Endothelial cell of umbilical vein (primary cell): ENCODE measurements at regions of chr12 and their contacts with region 1.

Region 1: GRCh38 chr12:57852620-57853500 is 6.3 kb upstream of the CTDSP2 start:
- DNase-seq: no peak
- H3K4me3 ChIP-seq: peak overlapping the region in 1 of 3 experiments; percentile 22
- H3K27ac ChIP-seq: no peak overlapping the region
- H3K4me1 ChIP-seq: no peaks in the 10 kb centered on the region
- H3K27me3 ChIP-seq: peaks cover 17 to 28% of the 10 kb centered on the region in 2 experiments
- CTCF ChIP-seq: peak in 1 of 2 donors; percentile 12
- POLR2A ChIP-seq: no peak

Region 2: GRCh38 chr12:57865090-57865751 is 12.4 kb after region 1 on chr12:
- CTCF ChIA-PET with region 1: interaction called, 17 read pairs
- POLR2A ChIA-PET with region 1: interaction called, 12 read pairs
- dilution Hi-C with region 1: no loop called
- intact Hi-C with region 1: no loop called
- DNase-seq: peak; percentile 81
- H3K4me3 ChIP-seq: peak overlapping the region; percentile 19 to 51 (median 38)
- H3K27ac ChIP-seq: peak overlapping the region; percentile 82
- H3K4me1 ChIP-seq: peaks cover 8% of the 10 kb centered on the region
- H3K27me3 ChIP-seq: no peaks in the 10 kb centered on the region
- CTCF ChIP-seq: no peak
- POLR2A ChIP-seq: peak; percentile 75

Region 3: DNA sequence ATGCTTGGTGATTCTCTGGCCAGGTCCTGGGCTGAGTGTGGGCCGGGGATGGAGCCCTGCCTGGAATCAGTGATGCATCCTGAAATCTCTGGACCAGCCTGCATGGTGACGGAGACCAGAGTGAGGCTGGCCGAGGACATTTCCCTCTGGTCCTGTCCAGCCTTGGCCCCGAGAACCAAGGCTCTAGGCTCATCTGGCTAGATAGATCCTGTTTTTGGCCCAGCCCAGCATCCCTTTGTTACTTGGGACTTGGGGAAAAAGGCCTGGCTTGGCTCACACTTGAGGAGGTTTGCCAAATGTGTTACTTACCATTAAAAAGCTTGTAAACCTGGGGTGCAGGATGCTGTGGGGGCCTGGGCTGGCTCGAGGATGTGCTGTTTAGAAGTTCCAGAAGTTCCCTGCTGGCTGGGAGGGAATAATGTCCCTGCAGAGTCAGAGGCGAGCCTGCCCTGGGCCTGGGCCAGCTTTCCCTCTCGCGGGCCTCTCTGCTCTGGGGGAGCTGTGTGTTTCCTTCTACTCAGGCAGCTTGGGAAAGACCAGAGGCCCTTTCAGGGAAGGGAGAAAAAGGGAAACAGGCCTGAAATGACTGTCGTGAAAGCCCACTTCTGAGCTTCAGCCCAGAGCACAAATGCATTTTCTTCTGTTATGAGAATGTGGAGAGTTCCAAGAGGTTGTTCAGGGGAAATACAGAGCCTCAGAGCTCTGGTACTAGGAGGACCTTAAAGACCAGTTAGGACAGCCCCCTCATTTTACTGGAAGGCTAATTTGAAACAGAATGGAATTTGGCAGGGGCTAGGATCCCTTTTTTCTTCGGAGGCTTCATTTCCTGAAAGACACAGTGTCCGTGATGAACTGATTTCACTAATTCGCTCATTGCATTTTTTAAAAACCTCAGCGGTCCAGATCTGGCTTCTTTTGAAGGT is 40.8 kb after region 1 on chr12:
- CTCF ChIA-PET with region 1: interaction called, 7 read pairs
- POLR2A ChIA-PET with region 1: no interaction called
- dilution Hi-C with region 1: no loop called
- intact Hi-C with region 1: loop called (anchors 1 kb)
- DNase-seq: peak; percentile 92
- H3K4me3 ChIP-seq: no peak overlapping the region
- H3K27ac ChIP-seq: no peak overlapping the region
- H3K4me1 ChIP-seq: peaks cover 34% of the 10 kb centered on the region
- H3K27me3 ChIP-seq: no peaks in the 10 kb centered on the region
- CTCF ChIP-seq: no peak
- POLR2A ChIP-seq: no peak

Region 4: DNA sequence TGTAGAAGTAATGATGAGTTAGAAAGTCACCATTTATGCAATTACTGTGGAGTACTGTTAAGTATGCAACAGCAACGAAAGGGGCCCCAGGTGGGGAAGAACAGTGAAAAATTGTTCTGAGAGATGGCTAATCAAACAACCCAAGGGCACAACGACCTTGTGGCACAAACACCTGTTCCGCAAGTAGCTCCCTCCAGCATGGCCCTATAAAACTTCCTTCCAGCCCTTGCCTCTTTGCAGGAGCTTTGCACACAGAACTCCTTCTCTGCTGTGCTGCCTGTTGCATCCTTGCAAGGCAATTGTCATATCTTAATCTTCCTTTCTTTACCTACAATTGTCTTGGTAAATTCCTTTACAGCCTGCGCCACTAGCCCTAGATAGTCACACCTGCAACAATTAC is 65.3 kb after region 1 on chr12:
- CTCF ChIA-PET with region 1: no interaction called
- POLR2A ChIA-PET with region 1: no interaction called
- dilution Hi-C with region 1: no loop called
- intact Hi-C with region 1: no loop called
- DNase-seq: no peak
- H3K4me3 ChIP-seq: no peak overlapping the region
- H3K27ac ChIP-seq: no peak overlapping the region
- H3K4me1 ChIP-seq: no peaks in the 10 kb centered on the region
- H3K27me3 ChIP-seq: peaks cover 9 to 27% of the 10 kb centered on the region in 2 experiments
- CTCF ChIP-seq: no peak
- POLR2A ChIP-seq: no peak